A673 (cell line): ENCODE measurements at regions of chr1 and their contacts with region 1.

Region 1: DNA sequence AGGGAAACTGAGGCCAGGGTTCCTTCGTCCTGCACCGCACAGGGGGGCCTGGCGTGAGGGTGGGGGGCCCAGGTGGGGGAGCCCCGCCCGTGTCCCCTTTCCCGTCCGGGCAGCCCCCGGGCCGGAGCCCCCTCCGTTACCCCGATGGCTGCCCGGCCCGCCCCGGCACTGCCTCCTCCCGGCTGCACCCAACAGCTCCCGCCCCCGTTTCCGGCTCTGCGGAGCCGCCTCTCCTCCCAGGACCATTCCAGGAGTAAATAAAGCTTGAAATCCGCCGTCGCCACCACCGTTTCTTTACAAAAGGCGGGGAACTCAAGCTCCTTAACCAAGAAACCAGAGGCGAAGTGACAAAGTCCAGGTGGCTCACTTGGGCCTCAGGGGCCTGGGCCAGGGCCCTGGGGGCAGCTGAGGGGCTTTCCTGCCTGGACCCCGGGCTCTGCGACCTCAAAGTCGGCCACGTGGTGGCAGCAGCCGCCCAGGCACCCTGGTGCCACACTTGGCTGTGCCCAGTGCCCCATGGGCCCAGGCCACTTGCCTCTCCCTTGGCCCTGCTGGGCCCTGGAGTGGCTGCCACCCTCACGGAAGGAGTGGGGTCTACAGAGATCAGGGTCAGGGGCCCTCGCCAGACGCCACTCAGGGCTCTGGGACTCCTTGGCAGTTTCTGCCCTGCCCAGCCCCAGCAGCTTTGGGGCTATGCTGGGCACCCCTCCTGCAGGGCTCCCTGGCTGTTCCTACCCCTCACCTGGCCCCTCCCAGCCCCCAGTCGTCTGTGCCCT is 514 bp upstream of the FAAP20 start:
- DNase-seq: peak; percentile 94
- H3K4me3 ChIP-seq: peak overlapping the region; percentile 65
- H3K27ac ChIP-seq: peak overlapping the region; percentile 88
- H3K4me1 ChIP-seq: peaks cover 37% of the 10 kb centered on the region
- H3K27me3 ChIP-seq: no peaks in the 10 kb centered on the region
- CTCF ChIP-seq: peak; percentile 96

Region 2: GRCh38 chr1:2065699-2066098 is 129.4 kb before region 1 on chr1:
- CTCF ChIA-PET with region 1: interaction called, 10 read pairs
- POLR2A ChIA-PET with region 1: no interaction called
- intact Hi-C with region 1: no loop called
- DNase-seq: no peak
- H3K4me3 ChIP-seq: no peak overlapping the region
- H3K27ac ChIP-seq: no peak overlapping the region
- H3K4me1 ChIP-seq: no peaks in the 10 kb centered on the region
- H3K27me3 ChIP-seq: peaks cover 20% of the 10 kb centered on the region
- CTCF ChIP-seq: no peak

Region 3: GRCh38 chr1:2174348-2175054 is 20.6 kb before region 1 on chr1:
- CTCF ChIA-PET with region 1: interaction called, 4 read pairs
- POLR2A ChIA-PET with region 1: interaction called, 17 read pairs
- intact Hi-C with region 1: no loop called
- DNase-seq: peak; percentile 77
- H3K4me3 ChIP-seq: peak overlapping the region; percentile 43
- H3K27ac ChIP-seq: no peak overlapping the region
- H3K4me1 ChIP-seq: no peaks in the 10 kb centered on the region
- H3K27me3 ChIP-seq: no peaks in the 10 kb centered on the region
- CTCF ChIP-seq: peak; percentile 100

Region 4: GRCh38 chr1:2205191-2205952 is 10.3 kb after region 1 on chr1:
- CTCF ChIA-PET with region 1: interaction called, 7 read pairs
- POLR2A ChIA-PET with region 1: interaction called, 13 read pairs
- intact Hi-C with region 1: no loop called
- DNase-seq: peak; percentile 93
- H3K4me3 ChIP-seq: peak overlapping the region; percentile 55
- H3K27ac ChIP-seq: peak overlapping the region; percentile 83
- H3K4me1 ChIP-seq: peaks cover 19% of the 10 kb centered on the region
- H3K27me3 ChIP-seq: no peaks in the 10 kb centered on the region
- CTCF ChIP-seq: 0 out of 2 replicates have a peak, but pooled peaks have one; percentile 12

Region 5: DNA sequence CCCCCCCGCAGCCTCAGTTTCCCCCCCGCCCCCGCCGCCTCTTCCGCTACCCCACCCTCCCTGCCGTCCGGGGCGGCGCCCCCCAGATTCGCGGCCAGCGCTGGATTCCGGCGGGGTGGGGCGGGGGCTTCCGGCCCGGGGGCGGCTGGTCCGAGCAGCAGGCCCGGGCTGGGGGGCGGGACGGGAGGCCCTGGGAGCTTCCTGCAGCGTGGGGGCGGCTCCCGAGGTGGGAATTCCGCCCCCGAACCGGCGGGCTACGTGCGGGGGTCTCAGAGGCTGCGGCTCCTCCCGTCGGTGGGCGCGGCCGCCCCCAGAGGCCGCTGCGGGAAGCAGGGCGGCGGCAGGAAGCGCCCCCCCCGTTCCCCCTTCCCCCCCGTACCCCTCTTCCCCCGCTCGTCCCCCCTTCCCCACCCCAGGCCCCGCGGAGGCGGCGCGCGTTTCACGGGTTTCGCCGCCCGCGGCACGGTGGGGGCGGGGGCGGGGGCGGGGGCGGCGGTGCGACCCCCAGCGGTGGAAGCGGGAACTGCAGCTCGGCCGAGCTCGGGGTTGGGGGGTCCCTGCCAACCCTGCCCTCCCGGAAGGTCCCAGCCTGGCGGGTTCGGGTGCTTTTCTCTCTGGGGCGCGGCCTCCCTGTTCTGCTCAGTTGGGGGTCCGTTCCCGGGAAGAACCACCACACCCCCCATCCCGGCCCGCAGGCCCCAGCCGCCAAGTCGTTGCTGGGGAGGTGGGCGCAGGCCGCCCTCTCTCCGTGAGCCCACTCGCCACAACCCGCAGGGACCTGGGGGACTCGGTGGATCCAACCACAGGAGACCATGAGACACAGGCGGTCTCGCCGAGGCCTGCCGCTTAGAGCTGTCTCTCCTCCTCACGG is 120.0 kb after region 1 on chr1:
- CTCF ChIA-PET with region 1: interaction called, 3 read pairs
- POLR2A ChIA-PET with region 1: interaction called, 10 read pairs
- intact Hi-C with region 1: loop called (anchors 10 kb)
- DNase-seq: peak; percentile 84
- H3K4me3 ChIP-seq: peak overlapping the region; percentile 48
- H3K27ac ChIP-seq: peak overlapping the region; percentile 96
- H3K4me1 ChIP-seq: peaks cover 60% of the 10 kb centered on the region
- H3K27me3 ChIP-seq: no peaks in the 10 kb centered on the region
- CTCF ChIP-seq: peak; percentile 62

Region 6: DNA sequence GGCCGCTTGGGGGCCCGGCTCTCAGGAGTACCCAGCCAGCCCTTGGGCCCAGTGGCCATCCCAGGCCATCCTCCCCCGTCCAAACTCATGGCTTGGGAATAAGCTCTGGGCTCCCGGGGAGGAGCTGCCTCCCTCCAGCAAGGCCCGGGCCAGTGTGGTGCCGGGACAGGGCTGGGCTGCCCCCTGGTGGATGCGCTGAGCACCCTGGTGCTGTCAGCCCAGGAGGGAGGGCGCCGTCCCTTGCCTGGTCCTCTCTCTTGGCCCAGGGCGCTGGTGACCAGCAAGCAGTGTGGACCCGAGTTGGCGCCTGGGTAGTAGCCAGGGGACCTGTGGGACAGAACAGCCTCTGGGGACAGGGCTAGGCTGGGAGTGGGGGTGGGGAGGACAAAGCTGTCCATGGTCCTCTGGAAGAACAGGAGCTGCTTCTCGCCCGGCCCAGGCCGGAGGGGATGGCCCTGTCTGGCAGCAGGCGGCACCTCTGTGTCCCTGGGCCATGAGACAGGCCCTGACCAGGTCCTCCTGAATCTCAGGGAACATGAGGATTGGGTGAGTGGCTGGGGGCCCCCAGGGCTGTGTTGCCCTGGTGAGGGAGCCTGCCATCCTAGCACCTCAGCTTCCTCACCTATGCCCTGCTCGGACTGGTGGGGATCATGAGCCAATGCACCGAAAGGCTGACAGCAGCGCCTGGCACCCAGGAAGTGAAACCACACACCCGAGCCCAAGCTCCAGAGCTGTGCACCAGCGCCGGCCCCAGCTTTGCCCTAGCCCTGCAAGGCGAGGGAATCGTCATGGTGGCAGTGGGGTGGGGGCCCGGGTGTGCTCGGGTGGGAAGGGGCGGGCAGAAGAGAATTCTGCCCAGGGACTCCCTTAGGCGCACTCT is 186.9 kb after region 1 on chr1:
- CTCF ChIA-PET with region 1: interaction called, 70 read pairs
- POLR2A ChIA-PET with region 1: no interaction called
- intact Hi-C with region 1: loop called (anchors 1 kb)
- DNase-seq: peak; percentile 80
- H3K4me3 ChIP-seq: no peak overlapping the region
- H3K27ac ChIP-seq: peak overlapping the region; percentile 30
- H3K4me1 ChIP-seq: peaks cover 3% of the 10 kb centered on the region
- H3K27me3 ChIP-seq: no peaks in the 10 kb centered on the region
- CTCF ChIP-seq: peak; percentile 96

Region 7: DNA sequence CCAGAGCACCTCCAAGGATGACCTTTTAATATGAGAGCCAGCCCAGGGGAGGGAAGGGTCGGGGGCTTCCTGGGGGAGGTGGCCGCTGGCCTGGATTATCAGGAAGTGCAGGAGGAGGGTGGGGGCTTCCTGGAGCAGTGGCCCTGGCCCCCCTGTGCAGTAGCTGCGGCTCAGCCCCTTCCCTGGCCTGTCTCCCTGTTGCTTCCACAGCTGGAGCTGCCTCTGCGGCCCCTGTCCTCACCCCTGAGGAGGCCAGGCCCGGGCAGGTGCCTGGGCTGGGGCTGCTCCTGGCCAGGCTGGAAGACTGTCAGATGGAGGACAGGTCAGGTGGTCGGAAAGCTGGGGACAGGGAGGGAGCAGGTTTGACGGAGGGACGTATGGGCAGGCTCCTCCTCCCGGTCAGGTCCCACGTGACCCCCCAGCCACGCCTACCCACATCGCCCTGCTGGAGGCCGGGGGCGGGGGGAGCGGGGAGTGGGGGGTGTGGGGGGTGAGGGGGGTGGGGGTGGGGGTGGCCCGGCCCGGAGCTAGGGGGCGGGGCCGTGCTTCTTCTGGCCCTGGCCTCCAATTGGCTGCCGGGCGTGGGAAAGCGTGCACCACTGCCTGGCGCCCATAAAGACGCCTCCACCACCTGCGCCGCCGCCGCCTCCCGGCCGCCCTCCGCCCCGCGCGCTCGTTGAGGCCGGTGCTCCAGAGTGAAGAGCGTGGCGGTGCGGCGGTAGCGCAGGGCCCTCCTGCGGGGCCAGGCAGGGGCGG is 350.9 kb after region 1 on chr1:
- CTCF ChIA-PET with region 1: no interaction called
- POLR2A ChIA-PET with region 1: no interaction called
- intact Hi-C with region 1: loop called (anchors 5 kb)
- DNase-seq: peak; percentile 91
- H3K4me3 ChIP-seq: peak overlapping the region; percentile 49
- H3K27ac ChIP-seq: peak overlapping the region; percentile 76
- H3K4me1 ChIP-seq: peaks cover 29% of the 10 kb centered on the region
- H3K27me3 ChIP-seq: no peaks in the 10 kb centered on the region
- CTCF ChIP-seq: no peak